ENCODE measurements at regions of chr10 and their contacts with region 1.

Region 1: GRCh38 chr10:13684252-13684791 is 97.6 kb downstream of the PRPF18 start:
- DNase-seq: peak; percentile 87

Region 2: DNA sequence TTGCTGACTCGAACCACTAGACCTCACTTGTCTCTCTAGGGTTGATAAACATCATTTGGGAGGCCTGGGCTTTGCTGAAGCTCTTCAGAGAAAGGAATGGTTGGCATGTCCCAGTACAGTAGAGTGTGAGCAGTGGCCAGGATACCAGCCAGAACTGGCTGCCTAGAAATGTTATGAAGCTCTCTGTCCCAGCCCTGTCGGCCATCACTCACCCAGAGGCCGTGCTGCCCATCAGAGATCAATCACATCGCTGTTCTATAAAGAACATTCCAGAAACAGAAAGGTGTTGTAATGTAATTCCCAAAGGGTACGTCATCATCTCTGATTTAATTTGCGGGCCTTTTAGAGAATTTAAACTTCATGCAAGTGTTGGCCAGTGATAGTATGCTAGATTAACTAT is 13.9 kb after region 1 on chr10:
- intact Hi-C with region 1: loop called (anchors 1 kb)
- DNase-seq: no peak

Region 3: GRCh38 chr10:13707156-13707881 is 23.0 kb after region 1 on chr10:
- intact Hi-C with region 1: loop called (anchors 2 kb)
- DNase-seq: peak; percentile 91